ENCODE measurements at regions of chr20 and their contacts with region 1.

Region 1: DNA sequence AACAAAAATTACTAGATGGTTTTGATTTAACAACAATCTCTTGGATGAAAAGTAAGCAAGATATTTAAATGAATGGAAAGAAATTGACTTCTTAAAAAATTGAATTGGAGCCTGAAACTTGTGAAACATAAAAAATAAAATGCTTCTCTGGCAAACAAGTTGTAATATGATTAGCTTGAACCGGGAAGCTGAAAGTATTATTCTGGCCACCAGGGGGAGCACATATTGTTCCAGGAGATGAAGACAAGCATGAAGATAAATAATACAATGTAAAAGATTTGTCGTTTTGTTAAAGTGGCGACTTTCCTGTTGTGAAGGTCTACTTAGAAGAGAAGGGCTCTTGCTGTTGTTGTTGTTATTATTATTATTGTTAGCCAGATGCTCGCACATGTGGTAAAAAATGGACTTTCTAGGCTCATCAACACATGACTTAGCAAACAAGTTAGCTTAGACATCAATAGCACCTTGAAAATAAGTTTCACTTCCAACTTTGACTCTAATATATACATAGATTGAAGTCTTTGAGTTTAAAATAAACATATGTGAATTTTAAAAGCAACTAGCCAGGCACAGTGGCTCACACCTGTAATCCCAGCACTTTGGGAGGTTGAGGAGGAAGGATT is 14.2 kb downstream of the PAX1 start:
- DNase-seq: peak; percentile 35
- ATAC-seq: 0 out of 2 replicates have a peak, but pooled peaks have one; percentile 46
- H3K4me3 ChIP-seq: no peak overlapping the region
- H3K27ac ChIP-seq: no peak overlapping the region
- H3K4me1 ChIP-seq: no peaks in the 10 kb centered on the region
- H3K27me3 ChIP-seq: peaks cover 10% of the 10 kb centered on the region; the same call in 1 of the 2 replicates
- CTCF ChIP-seq: peak; percentile 25 to 79 (median 57); a peak in 4 of 6 replicates
- POLR2A ChIP-seq: no peak
- RAD21 ChIP-seq: peak; percentile 45

Region 2: DNA sequence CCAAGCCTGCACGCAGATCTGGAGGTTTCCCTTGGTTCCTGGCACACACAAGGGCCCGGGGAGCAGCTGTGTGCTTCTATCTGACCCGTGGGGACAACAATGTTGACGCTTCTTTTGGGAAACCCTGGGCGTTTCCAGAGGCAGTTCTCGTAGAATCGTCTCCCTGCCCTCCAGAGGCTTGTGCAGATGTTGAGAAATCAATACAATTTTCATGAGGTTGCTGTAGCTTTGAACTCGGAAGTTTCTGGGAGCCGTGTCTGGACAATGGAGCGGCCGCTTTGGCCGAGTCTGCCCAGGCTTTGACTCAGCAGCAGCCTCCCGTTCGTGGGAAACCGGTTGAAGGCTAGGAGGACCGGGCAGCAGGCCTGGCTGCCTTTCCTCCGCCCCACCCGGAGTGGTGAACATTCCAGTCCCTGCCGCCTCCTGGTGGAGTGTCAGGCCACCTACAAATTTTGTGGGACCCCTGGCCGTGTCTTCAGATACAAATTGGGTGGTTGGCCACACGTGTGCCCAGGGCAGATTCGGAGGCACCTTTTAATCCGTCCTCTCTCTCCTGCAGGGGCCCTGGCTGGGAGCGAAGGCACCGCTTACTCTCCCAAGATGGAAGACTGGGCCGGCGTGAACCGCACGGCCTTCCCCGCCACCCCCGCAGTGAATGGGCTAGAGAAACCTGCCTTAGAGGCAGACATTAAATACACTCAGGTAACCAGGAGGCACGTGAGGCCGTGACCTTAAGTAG is 11.5 kb before region 1 on chr20:
- CTCF ChIA-PET with region 1: interaction called, 15 read pairs
- POLR2A ChIA-PET with region 1: no interaction called
- RAD21 ChIA-PET with region 1: no interaction called
- intact Hi-C with region 1: no loop called
- DNase-seq: no peak
- ATAC-seq: no peak
- H3K4me3 ChIP-seq: no peak overlapping the region
- H3K27ac ChIP-seq: no peak overlapping the region
- H3K4me1 ChIP-seq: no peaks in the 10 kb centered on the region
- H3K27me3 ChIP-seq: no peaks in the 10 kb centered on the region
- CTCF ChIP-seq: no peak
- POLR2A ChIP-seq: no peak
- RAD21 ChIP-seq: no peak

Region 3: DNA sequence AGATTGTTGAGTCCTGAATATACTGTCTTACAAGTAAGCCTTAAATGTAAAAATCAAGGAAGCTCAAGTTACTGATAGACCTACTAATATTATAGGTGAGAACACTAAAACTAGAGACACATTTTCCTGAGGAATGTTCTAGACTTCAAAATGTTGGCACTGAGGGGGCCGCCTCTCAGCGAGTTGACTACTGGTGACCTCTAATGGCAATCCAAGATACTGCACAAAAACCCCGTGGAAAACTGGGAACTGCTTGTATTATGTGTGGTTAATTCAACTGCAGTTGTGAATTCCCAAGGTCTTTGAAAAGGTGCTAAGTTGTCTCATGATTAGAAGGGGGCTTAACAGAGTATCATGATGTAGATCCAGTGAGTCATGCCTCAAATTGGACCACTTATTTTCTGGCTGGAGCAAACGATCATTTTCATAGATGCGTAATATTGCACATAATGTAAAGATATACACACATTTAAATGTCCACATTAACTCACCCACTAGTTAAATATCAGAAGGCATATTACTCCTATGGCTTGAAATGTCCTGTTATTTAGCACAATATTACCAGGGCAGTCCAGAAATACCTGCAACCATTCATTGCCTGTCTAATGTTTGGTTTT is 528.5 kb after region 1 on chr20:
- CTCF ChIA-PET with region 1: interaction called, 6 read pairs
- POLR2A ChIA-PET with region 1: no interaction called
- RAD21 ChIA-PET with region 1: no interaction called
- intact Hi-C with region 1: loop called (anchors 2 kb)
- DNase-seq: no peak
- ATAC-seq: no peak
- H3K4me3 ChIP-seq: no peak overlapping the region
- H3K27ac ChIP-seq: no peak overlapping the region
- H3K4me1 ChIP-seq: no peaks in the 10 kb centered on the region
- H3K27me3 ChIP-seq: peaks cover 11% of the 10 kb centered on the region
- CTCF ChIP-seq: peak; percentile 10 to 62 (median 53); a peak in 4 of 6 replicates
- POLR2A ChIP-seq: no peak
- RAD21 ChIP-seq: peak; percentile 49

Region 4: DNA sequence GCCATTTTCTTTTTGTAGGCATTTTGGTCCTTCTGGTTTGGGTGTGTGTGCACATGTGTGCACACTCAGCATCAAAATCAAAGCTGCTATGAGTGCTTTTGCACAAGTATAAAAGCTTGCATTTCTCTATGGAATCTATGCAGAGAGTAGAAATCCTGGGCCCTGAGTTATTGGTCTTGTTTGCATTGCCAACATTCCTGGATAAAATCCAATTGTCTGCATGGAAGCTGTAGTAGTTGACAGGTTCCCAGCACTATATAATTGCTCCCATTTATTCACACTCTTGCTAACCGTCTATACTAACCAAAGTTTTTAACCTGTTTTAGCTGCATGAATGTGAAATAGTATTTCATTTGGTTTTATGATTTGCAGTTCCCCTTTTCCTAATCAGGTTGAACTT is 587.7 kb after region 1 on chr20:
- CTCF ChIA-PET with region 1: interaction called, 7 read pairs
- POLR2A ChIA-PET with region 1: no interaction called
- RAD21 ChIA-PET with region 1: no interaction called
- intact Hi-C with region 1: loop called (anchors 1 kb)
- DNase-seq: no peak
- ATAC-seq: no peak
- H3K4me3 ChIP-seq: no peak overlapping the region
- H3K27ac ChIP-seq: no peak overlapping the region
- H3K4me1 ChIP-seq: no peaks in the 10 kb centered on the region
- H3K27me3 ChIP-seq: peaks cover 31% of the 10 kb centered on the region
- CTCF ChIP-seq: no peak
- POLR2A ChIP-seq: no peak
- RAD21 ChIP-seq: no peak

Region 5: GRCh38 chr20:22312744-22313346 is 593.1 kb after region 1 on chr20:
- CTCF ChIA-PET with region 1: interaction called, 7 read pairs
- POLR2A ChIA-PET with region 1: no interaction called
- RAD21 ChIA-PET with region 1: interaction called in 1 of 2 experiments, 3 read pairs
- intact Hi-C with region 1: loop called (anchors 1 kb)
- DNase-seq: peak; percentile 23
- ATAC-seq: no peak
- H3K4me3 ChIP-seq: no peak overlapping the region
- H3K27ac ChIP-seq: no peak overlapping the region
- H3K4me1 ChIP-seq: no peaks in the 10 kb centered on the region
- H3K27me3 ChIP-seq: peaks cover 28% of the 10 kb centered on the region
- CTCF ChIP-seq: peak; percentile 21 to 73 (median 64); a peak in 5 of 6 replicates
- POLR2A ChIP-seq: no peak
- RAD21 ChIP-seq: peak; percentile 54

Measured in HCT116 (cell line).